GM12878 (cell line): ENCODE measurements at regions of chr3 and their contacts with region 1.

Region 1: DNA sequence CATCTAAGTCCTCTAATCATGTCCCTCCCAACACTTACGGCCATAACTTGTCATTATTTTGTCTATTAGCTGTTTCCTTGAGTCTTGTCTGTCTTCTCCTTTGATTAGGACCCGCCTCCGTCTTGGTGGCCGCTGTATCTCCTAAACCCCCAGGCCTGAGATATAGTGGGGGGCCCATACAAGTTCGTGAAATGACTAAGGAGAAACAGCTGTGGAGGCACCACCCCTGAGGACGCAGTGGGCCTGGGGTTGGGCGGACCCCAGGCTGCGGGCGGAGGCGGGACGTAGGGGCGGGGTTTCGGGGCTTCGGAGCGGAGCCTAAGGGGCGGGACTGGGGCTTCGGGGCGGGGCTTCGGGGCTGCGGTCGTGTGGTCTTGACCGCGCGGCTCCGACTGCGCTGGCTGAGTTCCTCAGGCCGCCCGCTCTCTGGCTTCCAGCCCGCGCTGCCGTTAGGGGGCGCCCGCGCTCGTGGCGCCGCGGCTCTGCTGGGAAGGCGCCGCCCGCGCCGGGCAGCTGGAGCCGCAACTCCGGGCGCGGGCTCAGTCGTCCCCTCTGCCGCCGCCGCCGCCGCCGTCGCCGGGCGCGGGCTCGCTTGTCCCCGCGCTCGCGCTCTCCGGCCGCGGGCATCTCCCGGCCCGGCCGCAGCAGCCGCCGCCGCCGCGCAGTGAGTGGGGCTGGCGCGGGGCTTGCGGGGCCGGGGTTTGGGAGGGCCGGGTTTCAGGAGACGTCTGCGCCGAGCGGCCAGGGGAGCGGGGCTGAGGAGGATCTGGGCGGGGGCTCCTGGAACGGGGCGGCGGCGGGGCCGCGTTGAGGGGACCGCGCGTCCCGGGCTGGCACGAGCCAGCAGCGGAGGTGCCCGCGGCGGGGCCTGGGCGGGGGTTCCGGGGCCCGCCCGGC is at the start of gene KCTD6:
- DNase-seq: peak; percentile 57
- ATAC-seq: peak; percentile 97
- H3K4me3 ChIP-seq: peak within 1 kb of the TSS; percentile 78
- H3K27ac ChIP-seq: no peak within 1 kb of the TSS
- H3K4me1 ChIP-seq: peaks cover 5% of the 10 kb centered on the region
- H3K27me3 ChIP-seq: peaks cover 0 to 1% of the 10 kb centered on the region in 2 experiments; a peak in 3 of 4 replicates
- CTCF ChIP-seq: peak; percentile 62 to 93 (median 78); a peak in 5 of 6 replicates
- EP300 ChIP-seq: peak in 1 of 2 experiments; percentile 40; a peak in 1 of 4 replicates
- POLR2A ChIP-seq: 0 out of 2 replicates have a peak, but pooled peaks have one; percentile 25
- RAD21 ChIP-seq: peak; percentile 59
- polyA plus RNA-seq, gene KCTD6: 9.1 to 9.4 TPM

Region 2: GRCh38 chr3:58324391-58325390 is 167.1 kb before region 1 on chr3:
- CTCF ChIA-PET with region 1: interaction called, 3 read pairs
- POLR2A ChIA-PET with region 1: interaction called, 4 read pairs
- RAD21 ChIA-PET with region 1: interaction called, 4 read pairs
- SMC1A ChIA-PET with region 1: interaction called, 5 read pairs
- in situ Hi-C with region 1: loop called (anchors 5 kb)
- intact Hi-C with region 1: no loop called
- DNase-seq: no peak
- ATAC-seq: peak; percentile 59
- H3K4me3 ChIP-seq: no peak overlapping the region
- H3K27ac ChIP-seq: no peak overlapping the region; the same call in 1 of the 2 replicates
- H3K4me1 ChIP-seq: peaks cover 17% of the 10 kb centered on the region
- H3K27me3 ChIP-seq: no peaks in the 10 kb centered on the region
- CTCF ChIP-seq: no peak
- EP300 ChIP-seq: no peak
- POLR2A ChIP-seq: no peak
- RAD21 ChIP-seq: no peak

Region 3: DNA sequence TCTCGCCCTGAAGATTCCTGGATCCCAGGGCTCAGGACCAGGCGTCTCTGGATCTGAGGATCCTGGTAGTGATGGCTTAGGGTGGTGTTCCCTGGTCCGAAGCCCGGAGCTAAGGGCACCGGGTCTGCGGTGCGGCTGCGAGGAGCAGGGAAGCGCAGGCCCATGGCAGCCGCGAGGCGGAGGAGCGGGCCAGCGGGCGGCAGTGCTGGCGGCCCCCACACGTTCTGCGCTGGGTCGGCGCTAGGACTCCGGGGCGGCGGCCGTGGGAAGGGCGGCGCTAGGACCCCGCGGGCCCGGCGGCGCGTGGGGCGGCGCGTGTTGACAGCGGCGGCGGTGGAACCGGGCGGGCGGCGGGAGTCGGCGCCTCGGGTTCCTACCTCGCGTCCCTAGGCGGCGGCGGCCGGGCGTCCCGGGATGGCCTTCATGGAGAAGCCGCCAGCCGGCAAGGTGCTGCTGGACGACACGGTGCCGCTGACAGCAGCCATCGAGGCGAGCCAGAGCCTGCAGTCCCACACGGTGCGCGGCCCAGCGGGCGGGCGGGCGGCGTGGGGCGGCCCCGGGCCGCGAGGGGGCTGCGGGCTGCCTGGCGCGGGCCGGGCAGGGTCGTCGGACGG is 159.1 kb before region 1 on chr3 and contains the start of gene PXK:
- CTCF ChIA-PET with region 1: interaction called, 15 read pairs
- POLR2A ChIA-PET with region 1: no interaction called
- RAD21 ChIA-PET with region 1: interaction called, 7 read pairs
- SMC1A ChIA-PET with region 1: interaction called, 19 read pairs
- in situ Hi-C with region 1: loop called (anchors 5 kb)
- intact Hi-C with region 1: loop called (anchors 2 kb)
- DNase-seq: no peak
- ATAC-seq: peak; percentile 92
- H3K4me3 ChIP-seq: peak within 1 kb of the TSS; percentile 93
- H3K27ac ChIP-seq: no peak within 1 kb of the TSS; the same call in 1 of the 2 replicates
- H3K4me1 ChIP-seq: peaks cover 7% of the 10 kb centered on the region; the same call in 1 of the 2 replicates
- H3K27me3 ChIP-seq: no peaks in the 10 kb centered on the region
- CTCF ChIP-seq: peak in 2 of 3 experiments; percentile 14 to 31; a peak in 1 of 6 replicates
- EP300 ChIP-seq: no peak
- POLR2A ChIP-seq: peak; percentile 68
- RAD21 ChIP-seq: peak; percentile 40; the same call in 1 of the 2 replicates
- polyA plus RNA-seq, gene PXK: 8.4 to 10.5 TPM

Region 4: GRCh38 chr3:58463181-58463941 is 28.4 kb before region 1 on chr3:
- CTCF ChIA-PET with region 1: interaction called, 18 read pairs
- POLR2A ChIA-PET with region 1: interaction called, 3 read pairs
- RAD21 ChIA-PET with region 1: interaction called, 5 read pairs
- SMC1A ChIA-PET with region 1: interaction called, 3 read pairs
- in situ Hi-C with region 1: no loop called
- intact Hi-C with region 1: no loop called
- DNase-seq: no peak
- ATAC-seq: peak; percentile 98
- H3K4me3 ChIP-seq: no peak overlapping the region
- H3K27ac ChIP-seq: no peak overlapping the region
- H3K4me1 ChIP-seq: no peaks in the 10 kb centered on the region
- H3K27me3 ChIP-seq: no peaks in the 10 kb centered on the region
- CTCF ChIP-seq: peak; percentile 90 to 91 (median 90)
- EP300 ChIP-seq: 0 out of 4 replicates have a peak, but pooled peaks of 1 of the 2 experiments have one; percentile 31
- POLR2A ChIP-seq: no peak
- RAD21 ChIP-seq: peak; percentile 67

Region 5: GRCh38 chr3:58502872-58503271 is 11.1 kb after region 1 on chr3:
- CTCF ChIA-PET with region 1: interaction called, 12 read pairs
- POLR2A ChIA-PET with region 1: interaction called, 3 read pairs
- RAD21 ChIA-PET with region 1: interaction called, 5 read pairs
- SMC1A ChIA-PET with region 1: no interaction called
- in situ Hi-C with region 1: no loop called
- intact Hi-C with region 1: no loop called
- DNase-seq: no peak
- ATAC-seq: no peak
- H3K4me3 ChIP-seq: no peak overlapping the region
- H3K27ac ChIP-seq: no peak overlapping the region
- H3K4me1 ChIP-seq: no peaks in the 10 kb centered on the region
- H3K27me3 ChIP-seq: no peaks in the 10 kb centered on the region
- CTCF ChIP-seq: no peak
- EP300 ChIP-seq: no peak
- POLR2A ChIP-seq: no peak
- RAD21 ChIP-seq: no peak

Region 6: DNA sequence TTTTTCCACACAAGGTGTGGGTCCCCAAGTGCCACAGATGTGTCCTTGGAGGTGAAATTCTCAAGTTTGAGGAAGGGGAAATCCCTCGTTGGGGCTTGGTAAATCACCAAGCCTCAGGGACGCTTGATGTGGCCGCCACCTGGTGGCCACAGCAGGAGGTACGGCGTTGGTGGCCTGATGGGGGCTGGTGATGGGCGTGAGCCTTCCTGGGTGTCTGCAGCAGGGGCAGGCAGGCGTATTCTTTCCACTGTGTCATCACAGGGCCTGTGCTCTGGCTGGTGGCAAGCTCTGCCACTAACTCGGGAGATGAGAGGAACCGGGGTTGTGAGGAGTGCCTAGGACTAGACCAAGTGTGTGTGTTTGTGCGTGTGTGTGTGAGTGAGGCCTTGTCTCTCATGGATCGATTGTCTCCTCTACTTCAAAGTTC is 41.1 kb after region 1 on chr3:
- CTCF ChIA-PET with region 1: interaction called, 12 read pairs
- POLR2A ChIA-PET with region 1: interaction called, 4 read pairs
- RAD21 ChIA-PET with region 1: interaction called, 7 read pairs
- SMC1A ChIA-PET with region 1: interaction called, 7 read pairs
- in situ Hi-C with region 1: no loop called
- intact Hi-C with region 1: loop called (anchors 1 kb)
- DNase-seq: peak; percentile 11
- ATAC-seq: peak; percentile 99
- H3K4me3 ChIP-seq: no peak overlapping the region
- H3K27ac ChIP-seq: no peak overlapping the region
- H3K4me1 ChIP-seq: no peaks in the 10 kb centered on the region
- H3K27me3 ChIP-seq: no peaks in the 10 kb centered on the region; a peak in 1 of 4 replicates
- CTCF ChIP-seq: peak; percentile 94 to 96 (median 94)
- EP300 ChIP-seq: no peak
- POLR2A ChIP-seq: no peak
- RAD21 ChIP-seq: peak; percentile 96

Region 7: DNA sequence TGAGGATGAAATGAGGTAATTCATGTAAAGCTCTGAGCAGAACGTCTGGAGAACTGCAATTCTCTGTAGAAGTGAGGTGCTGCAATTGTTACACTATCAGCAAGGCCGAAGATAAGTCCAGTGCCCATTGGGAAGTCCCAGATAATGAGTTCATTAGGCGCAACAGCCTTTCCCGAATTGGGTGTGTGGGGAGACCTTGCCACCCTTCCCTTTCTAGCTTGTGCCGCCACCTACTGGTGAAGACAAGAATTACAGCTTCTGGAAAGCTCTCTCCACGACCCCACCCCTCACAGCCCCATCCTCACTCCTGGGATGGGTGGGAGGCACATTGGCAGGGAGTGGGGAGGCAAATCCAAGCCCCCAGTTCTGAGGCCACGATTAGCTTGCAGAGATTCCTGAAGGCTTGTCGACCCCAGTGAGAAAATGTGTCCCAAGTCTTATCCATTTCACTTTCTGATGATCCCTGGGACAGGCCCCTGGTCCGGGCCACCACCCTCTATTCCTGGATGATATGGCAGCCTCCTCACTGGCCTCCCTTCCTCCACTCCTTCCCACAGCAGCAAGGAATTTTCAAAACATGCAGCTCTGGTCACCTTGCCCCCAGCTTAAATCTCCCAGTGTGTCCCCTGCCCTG is 138.4 kb after region 1 on chr3:
- CTCF ChIA-PET with region 1: interaction called, 12 read pairs
- POLR2A ChIA-PET with region 1: no interaction called
- RAD21 ChIA-PET with region 1: interaction called, 3 read pairs
- SMC1A ChIA-PET with region 1: interaction called, 5 read pairs
- in situ Hi-C with region 1: no loop called
- intact Hi-C with region 1: no loop called
- DNase-seq: no peak
- ATAC-seq: peak; percentile 87
- H3K4me3 ChIP-seq: no peak overlapping the region
- H3K27ac ChIP-seq: no peak overlapping the region
- H3K4me1 ChIP-seq: no peaks in the 10 kb centered on the region
- H3K27me3 ChIP-seq: peaks cover 2 to 3% of the 10 kb centered on the region in 2 experiments; a peak in 1 of 4 replicates
- CTCF ChIP-seq: peak; percentile 87 to 89 (median 88)
- EP300 ChIP-seq: no peak
- POLR2A ChIP-seq: no peak
- RAD21 ChIP-seq: peak; percentile 83